A673 (cell line): ENCODE measurements at regions of chr1 and their contacts with region 1.

Region 1: DNA sequence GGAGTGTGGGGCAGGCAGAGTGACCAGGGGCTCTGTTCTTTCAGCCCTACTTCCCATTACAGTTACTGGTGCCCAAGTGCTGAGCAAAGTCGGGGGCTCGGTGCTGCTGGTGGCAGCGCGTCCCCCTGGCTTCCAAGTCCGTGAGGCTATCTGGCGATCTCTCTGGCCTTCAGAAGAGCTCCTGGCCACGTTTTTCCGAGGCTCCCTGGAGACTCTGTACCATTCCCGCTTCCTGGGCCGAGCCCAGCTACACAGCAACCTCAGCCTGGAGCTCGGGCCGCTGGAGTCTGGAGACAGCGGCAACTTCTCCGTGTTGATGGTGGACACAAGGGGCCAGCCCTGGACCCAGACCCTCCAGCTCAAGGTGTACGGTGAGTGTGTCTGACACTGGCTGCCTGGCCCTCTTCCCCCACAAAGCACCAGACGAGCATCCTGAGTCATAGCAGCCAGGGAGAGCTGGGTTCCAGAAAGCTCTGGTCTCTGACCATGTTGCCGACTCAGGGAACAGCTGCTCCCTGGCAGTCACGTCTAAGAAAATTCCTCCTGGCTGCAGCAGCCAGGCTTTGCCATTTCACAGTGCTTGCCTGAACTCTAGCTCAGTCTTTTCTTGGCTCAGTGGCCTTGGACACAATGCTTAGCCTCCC is 3.3 kb downstream of the SLAMF8 start:
- DNase-seq: no peak
- H3K4me3 ChIP-seq: no peak overlapping the region
- H3K27ac ChIP-seq: no peak overlapping the region
- H3K4me1 ChIP-seq: peaks cover 19% of the 10 kb centered on the region
- H3K27me3 ChIP-seq: no peaks in the 10 kb centered on the region
- CTCF ChIP-seq: no peak

Region 2: GRCh38 chr1:159141584-159142390 is 688.2 kb before region 1 on chr1:
- CTCF ChIA-PET with region 1: no interaction called
- POLR2A ChIA-PET with region 1: no interaction called
- intact Hi-C with region 1: no loop called
- DNase-seq: peak; percentile 12
- H3K4me3 ChIP-seq: no peak overlapping the region
- H3K27ac ChIP-seq: no peak overlapping the region
- H3K4me1 ChIP-seq: no peaks in the 10 kb centered on the region
- H3K27me3 ChIP-seq: peaks cover 94% of the 10 kb centered on the region
- CTCF ChIP-seq: no peak

Region 3: GRCh38 chr1:159931101-159931794 is 101.3 kb after region 1 on chr1:
- CTCF ChIA-PET with region 1: no interaction called
- POLR2A ChIA-PET with region 1: interaction called, 12 read pairs
- intact Hi-C with region 1: no loop called
- DNase-seq: no peak
- H3K4me3 ChIP-seq: no peak overlapping the region
- H3K27ac ChIP-seq: no peak overlapping the region
- H3K4me1 ChIP-seq: peaks cover 11% of the 10 kb centered on the region
- H3K27me3 ChIP-seq: no peaks in the 10 kb centered on the region
- CTCF ChIP-seq: no peak